Sciatic nerve (tissue), 2 donors: ENCODE measurements at regions of chr3 and their contacts with region 1.

Region 1: GRCh38 chr3:6168256-6168655 is 692.7 kb upstream of the GRM7 start:
- DNase-seq: no peak
- ATAC-seq: no peak

Region 2: GRCh38 chr3:4814305-4814903 is 1353.9 kb before region 1 on chr3:
- intact Hi-C with region 1: no loop called
- DNase-seq: no peak
- ATAC-seq: peak; percentile 49

Region 3: DNA sequence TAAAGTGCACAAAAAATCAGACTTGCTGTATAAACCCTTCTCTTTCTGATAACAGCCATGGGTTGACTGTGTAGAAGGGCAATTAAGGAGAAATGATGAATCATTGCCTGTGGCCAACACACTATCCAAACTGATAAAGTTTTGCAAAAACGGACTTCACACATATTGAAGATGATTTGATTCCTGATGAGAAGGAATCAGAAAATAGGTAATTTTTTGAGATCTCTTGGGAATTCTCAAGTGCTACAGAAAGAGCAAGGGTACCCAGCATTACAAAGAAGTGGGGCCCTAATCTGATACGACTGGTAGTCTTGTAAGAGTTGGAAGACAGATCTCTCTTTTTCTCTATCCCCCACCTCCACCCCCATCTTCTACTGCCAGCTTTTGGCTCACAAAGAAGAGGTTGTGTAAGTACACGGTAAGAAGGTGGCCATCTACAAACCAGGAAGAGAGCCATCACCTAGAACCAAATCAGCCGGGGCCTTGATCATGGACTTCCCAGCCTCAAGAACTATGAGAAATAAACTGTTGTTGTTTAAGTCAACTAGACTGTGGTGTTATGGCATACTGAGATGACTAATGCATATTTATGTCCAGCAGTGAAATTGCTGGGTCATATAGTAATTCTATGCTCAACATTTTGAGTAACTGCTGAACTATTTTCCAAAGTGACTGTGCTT is 726.0 kb before region 1 on chr3:
- intact Hi-C with region 1: loop called (anchors 5 kb)
- DNase-seq: no peak
- ATAC-seq: no peak

Region 4: DNA sequence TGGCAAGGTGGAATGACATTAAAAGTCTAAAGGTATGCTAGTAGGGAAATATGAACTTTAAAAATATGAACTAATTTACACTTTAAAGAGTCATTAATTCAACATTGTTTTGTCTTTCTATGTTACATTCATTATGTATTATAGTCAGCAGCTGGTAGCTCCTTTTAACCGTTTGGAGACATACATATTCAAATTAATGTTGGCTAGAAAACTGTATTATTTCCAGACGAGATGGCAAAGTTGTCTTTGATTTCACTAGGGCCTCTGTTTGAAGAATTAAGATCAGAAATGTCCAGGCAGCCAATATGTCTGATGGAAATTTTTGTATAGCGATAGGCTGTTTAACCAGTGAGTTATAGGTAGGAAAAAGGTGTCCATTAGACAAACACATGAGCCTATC is 1510.3 kb after region 1 on chr3:
- intact Hi-C with region 1: loop called (anchors 5 kb)
- DNase-seq: no peak
- ATAC-seq: no peak